ENCODE measurements at regions of chr11 and their contacts with region 1.

Region 1: GRCh38 chr11:65888163-65888814 is at the start of gene FIBP:
- DNase-seq: peak; percentile 99
- H3K4me3 Mint-ChIP-seq: peak within 1 kb of the TSS; percentile 97
- H3K27ac Mint-ChIP-seq: peak within 1 kb of the TSS; percentile 95
- H3K4me1 Mint-ChIP-seq: peaks cover 62% of the 10 kb centered on the region
- H3K27me3 Mint-ChIP-seq: no peaks in the 10 kb centered on the region
- total RNA-seq, gene FIBP: 83.1 to 86.6 TPM

Region 2: GRCh38 chr11:65779851-65780577 is 108.3 kb before region 1 on chr11:
- CTCF ChIA-PET with region 1: interaction called, 5 read pairs
- intact Hi-C with region 1: loop called (anchors 2 kb)
- DNase-seq: peak; percentile 88
- H3K4me3 Mint-ChIP-seq: peak overlapping the region; percentile 86
- H3K27ac Mint-ChIP-seq: peak overlapping the region; percentile 36
- H3K4me1 Mint-ChIP-seq: peaks cover 10% of the 10 kb centered on the region
- H3K27me3 Mint-ChIP-seq: no peaks in the 10 kb centered on the region

Region 3: DNA sequence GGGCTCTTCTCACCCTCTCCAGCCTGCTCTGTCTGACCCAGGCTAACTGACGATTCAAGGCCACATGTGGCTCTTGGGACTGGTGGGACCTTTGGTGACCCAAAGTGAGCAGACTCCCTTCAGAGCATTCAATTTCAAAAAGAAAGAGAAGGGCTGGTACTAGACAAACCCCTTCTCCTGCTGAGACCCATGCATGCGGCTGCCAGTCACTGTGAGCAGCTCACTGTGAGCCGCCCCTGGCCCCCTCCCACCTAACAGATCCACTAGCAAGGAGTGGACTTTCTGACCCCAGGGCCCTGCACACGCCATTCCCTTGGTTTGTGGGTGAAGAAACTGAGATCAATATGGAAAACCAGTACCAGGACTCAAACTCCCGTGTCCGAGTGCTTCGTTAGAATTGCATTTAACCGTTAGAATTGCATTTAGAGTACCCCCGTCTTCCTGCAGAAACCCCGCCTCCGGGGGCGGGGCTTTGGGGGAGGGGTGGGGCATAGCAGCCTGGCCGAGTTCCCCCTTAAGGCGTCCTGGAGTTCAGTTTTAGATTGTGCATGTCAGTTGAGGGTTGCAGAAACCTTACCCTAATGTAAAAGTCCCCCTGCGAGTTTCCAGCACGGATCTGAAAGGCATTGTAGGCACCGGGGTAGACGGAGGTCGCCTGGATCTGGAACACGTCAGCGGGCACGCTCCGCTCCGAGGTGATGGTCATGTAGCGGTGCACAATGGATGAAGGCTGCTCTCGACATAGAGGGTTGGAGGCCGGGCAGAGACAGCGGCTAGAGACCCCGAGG is 20.8 kb before region 1 on chr11:
- CTCF ChIA-PET with region 1: interaction called, 178 read pairs
- intact Hi-C with region 1: loop called (anchors 2 kb)
- DNase-seq: no peak
- H3K4me3 Mint-ChIP-seq: no peak overlapping the region
- H3K27ac Mint-ChIP-seq: no peak overlapping the region
- H3K4me1 Mint-ChIP-seq: peaks cover 11% of the 10 kb centered on the region
- H3K27me3 Mint-ChIP-seq: no peaks in the 10 kb centered on the region

Region 4: DNA sequence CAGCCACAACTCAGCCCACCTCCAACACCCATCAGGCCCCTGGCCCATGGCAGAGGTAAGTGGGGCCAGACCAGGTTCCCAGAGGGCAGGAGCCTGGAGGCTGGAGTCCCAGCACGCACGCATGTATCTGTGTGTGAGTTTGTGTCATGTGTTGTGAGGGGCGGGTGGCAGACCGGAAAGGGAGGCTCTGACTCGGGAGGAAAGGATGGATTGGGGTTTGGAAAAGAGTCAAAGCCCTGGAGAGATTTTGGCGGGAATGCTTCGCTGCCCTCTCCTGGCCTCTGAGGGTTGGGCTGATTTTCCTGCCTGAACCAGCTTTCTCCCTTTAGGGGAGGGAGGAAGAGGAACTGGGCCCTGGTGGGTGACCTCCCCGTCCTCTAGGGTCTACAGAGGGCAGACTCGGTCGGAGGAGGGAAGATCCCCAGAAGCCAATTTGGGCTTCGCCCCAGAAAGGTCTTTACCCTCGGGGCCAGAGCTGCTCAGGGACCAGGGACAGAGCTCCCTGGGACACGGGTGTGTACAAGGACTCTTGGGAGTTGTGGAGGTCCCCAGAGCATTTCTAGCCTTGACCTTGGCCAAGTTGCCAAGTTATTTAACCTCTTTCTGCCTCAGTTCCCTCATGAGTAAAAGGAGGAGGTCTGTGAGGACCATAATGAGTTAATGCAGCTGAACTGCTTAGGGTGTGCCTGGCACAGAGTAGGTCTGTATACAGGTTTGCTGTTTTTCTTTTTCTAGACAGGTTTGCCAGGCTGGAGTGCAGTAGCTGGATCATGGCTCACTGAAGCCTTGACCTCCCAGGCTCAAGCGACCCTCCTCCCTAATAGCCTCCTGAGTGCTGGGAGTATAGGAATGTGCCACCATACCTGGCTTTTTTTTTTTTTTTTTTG is 23.6 kb after region 1 on chr11:
- CTCF ChIA-PET with region 1: interaction called, 22 read pairs
- intact Hi-C with region 1: loop called (anchors 2 kb)
- DNase-seq: no peak
- H3K4me3 Mint-ChIP-seq: no peak overlapping the region
- H3K27ac Mint-ChIP-seq: no peak overlapping the region
- H3K4me1 Mint-ChIP-seq: peaks cover 22% of the 10 kb centered on the region
- H3K27me3 Mint-ChIP-seq: peaks cover 3% of the 10 kb centered on the region

Region 5: DNA sequence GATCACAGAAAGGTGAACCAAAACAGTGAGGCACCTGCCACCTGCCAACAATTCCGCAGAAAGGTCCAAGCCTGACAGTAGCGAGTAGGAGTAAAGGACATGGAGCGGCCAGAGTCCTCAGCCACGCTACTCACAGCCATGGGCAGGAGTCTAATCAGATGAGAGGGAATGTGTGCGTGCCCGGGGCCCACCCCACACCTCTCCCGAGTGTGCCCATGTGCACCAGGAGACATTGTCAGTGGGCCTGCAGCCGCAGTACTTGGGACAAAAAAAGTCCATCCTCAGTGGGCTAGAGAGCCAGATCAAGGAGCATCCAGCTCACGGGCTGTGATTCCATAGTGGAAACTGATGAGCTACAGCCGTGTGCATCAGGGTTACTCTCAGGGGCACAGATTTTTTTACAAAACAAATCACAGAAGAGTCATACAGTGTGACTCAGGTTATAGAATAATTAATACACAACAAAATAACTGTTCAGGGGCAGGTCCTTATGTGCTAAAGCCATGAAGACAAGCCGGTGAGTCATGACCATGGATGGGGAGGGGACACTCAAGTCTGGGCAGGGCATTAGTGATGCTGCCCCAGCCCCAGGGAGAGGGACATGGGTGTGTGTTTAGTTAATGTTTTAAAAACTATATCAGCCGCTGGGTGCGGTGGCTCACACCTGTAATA is 85.3 kb after region 1 on chr11:
- CTCF ChIA-PET with region 1: interaction called, 10 read pairs
- intact Hi-C with region 1: no loop called
- DNase-seq: no peak
- H3K4me3 Mint-ChIP-seq: no peak overlapping the region
- H3K27ac Mint-ChIP-seq: no peak overlapping the region
- H3K4me1 Mint-ChIP-seq: peaks cover 3% of the 10 kb centered on the region
- H3K27me3 Mint-ChIP-seq: no peaks in the 10 kb centered on the region

Region 6: DNA sequence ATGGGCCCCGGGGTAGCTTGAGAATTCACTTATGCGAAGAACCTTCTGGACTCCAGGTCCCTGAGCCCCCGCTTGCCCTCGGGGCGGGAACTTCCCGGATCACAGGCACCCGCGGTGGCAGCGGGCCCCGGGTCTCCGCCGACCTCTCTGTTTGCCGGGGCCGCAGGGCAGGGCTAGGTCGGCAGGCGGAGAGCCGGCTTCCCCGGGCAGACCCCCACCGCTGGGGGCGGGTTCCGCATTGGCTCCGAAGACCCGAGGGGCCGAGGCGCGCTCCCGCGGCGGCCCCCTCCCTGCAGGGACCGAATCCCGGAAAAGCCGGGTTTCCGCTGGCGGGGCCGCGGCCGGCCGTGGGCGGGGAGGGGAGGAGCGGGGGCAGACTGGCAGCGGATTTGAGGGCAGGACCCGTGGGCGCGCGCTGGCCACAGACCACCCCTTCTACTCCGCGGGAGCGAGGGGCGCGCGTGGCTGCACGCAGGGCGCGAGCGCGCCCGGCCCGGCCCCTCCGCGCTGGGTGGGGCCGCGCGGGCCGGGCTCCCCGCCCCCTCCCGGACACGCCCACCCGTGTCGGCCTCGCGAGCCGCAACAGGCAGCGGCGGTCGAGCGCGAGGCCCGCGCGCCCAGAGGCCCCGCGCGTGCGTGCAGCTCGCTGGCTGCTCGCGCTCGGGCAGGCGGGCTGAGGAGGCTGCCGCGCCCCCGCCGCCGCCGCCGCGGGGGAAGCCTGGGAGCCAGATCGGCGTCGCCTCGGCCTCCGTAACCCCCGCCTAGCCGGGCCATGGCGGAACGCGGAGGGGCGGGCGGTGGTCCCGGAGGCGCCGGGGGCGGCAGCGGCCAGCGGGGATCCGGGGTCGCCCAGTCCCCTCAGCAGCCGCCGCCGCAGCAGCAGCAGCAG is 181.7 kb after region 1 on chr11 and contains the start of gene PACS1:
- CTCF ChIA-PET with region 1: no interaction called
- intact Hi-C with region 1: loop called (anchors 5 kb)
- DNase-seq: peak; percentile 81
- H3K4me3 Mint-ChIP-seq: peak within 1 kb of the TSS; percentile 89
- H3K27ac Mint-ChIP-seq: peak within 1 kb of the TSS; percentile 97
- H3K4me1 Mint-ChIP-seq: peaks cover 62% of the 10 kb centered on the region
- H3K27me3 Mint-ChIP-seq: no peaks in the 10 kb centered on the region
- total RNA-seq, gene PACS1: 77.8 to 80.7 TPM

Region 7: GRCh38 chr11:66192181-66192863 is 304.0 kb after region 1 on chr11:
- CTCF ChIA-PET with region 1: no interaction called
- intact Hi-C with region 1: no loop called
- DNase-seq: no peak
- H3K4me3 Mint-ChIP-seq: no peak overlapping the region
- H3K27ac Mint-ChIP-seq: no peak overlapping the region
- H3K4me1 Mint-ChIP-seq: peaks cover 22% of the 10 kb centered on the region
- H3K27me3 Mint-ChIP-seq: no peaks in the 10 kb centered on the region

Measured in activated naive CD4-positive, alpha-beta T cell treated with anti-CD3 and anti-CD28 coated beads for 36 hours (primary cell).